Activated CD4-positive, alpha-beta memory T cell treated with anti-CD3 and anti-CD28 coated beads for 36 hours (primary cell): ENCODE measurements at regions of chr20 and their contacts with region 1.

Region 1: DNA sequence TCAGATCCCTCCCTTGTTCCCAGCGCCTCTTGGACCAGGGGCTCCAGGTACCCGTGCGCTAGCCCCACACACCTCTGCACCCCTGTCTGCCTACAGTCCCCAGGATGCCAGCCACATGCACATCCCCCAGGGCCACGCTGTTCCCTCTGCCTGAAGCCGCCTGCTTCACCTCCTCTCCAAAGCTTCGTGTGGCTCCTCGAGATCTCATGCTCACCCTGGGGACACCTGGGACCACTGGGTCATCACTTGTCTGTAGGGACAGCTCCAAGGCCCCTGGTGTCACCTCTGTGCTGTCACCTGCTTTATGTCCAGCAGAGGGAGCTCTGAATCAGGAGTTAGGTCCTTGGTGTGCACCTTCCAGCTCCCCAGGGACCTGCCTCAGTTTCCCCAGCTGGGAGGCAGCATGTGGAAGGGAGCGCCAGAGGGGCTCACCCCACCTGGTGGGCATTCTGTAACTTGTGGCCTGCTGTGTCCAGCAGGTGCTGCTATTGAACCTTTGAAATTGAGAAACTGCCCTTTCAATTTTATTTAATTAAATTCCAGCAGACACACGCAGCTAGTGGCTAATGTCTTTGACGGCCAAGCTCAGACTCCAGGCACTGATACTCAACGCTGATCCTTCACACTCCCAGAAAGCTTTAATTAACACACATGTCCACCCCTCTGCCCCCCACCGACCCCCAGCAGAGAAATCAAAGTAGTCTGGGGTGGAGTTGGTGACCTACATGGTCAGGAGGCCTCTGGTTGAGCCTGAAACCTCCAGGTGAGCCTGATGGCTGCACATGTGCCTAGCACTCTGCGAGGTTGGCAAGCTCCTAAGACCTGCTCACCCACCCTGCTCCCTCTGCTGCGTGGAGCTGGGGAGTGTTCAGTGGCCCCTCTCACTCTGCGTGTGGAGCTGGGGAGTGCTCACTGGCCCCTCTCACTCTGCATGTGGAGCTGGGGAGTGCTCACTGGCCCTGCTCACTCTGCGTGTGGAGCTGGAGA is 7.6 kb upstream of the YTHDF1 start:
- DNase-seq: peak; percentile 55
- H3K4me3 Mint-ChIP-seq: no peak overlapping the region
- H3K27ac Mint-ChIP-seq: no peak overlapping the region
- H3K4me1 Mint-ChIP-seq: no peaks in the 10 kb centered on the region
- H3K27me3 Mint-ChIP-seq: no peaks in the 10 kb centered on the region

Region 2: GRCh38 chr20:63206904-63207303 is 16.6 kb before region 1 on chr20:
- CTCF ChIA-PET with region 1: interaction called, 58 read pairs
- POLR2A ChIA-PET with region 1: no interaction called
- intact Hi-C with region 1: no loop called
- DNase-seq: no peak
- H3K4me3 Mint-ChIP-seq: no peak overlapping the region
- H3K27ac Mint-ChIP-seq: no peak overlapping the region
- H3K4me1 Mint-ChIP-seq: peaks cover 32% of the 10 kb centered on the region
- H3K27me3 Mint-ChIP-seq: no peaks in the 10 kb centered on the region

Region 3: DNA sequence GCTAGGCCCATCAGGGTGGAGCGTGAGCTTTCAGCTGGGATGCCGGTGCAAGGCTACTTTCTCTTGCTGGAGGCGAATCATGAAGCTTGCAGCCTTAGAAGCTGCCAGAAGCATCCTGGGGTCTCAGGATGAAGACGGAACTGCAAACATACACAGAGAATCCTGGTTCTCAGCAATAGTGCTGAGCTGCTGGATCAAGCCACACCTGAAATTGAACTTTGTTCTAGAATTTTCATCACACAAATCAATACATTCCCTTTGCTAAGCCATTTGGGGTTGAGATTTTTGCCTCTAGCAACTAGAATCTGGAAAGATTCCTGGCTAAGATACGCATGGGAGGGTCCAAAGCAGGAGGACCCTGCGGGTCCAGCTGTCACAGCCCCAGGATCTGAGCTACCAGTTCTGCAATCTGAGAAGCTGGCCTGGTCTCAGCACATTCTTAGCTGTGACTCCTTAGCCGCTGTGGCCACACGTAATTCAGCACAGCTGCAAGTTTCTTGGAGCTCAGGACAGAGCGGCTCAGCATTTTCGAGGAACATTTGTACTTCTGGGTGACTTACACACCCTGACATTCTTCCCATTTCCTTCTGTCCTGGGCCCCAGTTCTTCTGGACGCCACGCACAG is 42.5 kb after region 1 on chr20:
- CTCF ChIA-PET with region 1: interaction called, 25 read pairs
- POLR2A ChIA-PET with region 1: no interaction called
- intact Hi-C with region 1: loop called (anchors 5 kb)
- DNase-seq: no peak
- H3K4me3 Mint-ChIP-seq: no peak overlapping the region
- H3K27ac Mint-ChIP-seq: no peak overlapping the region
- H3K4me1 Mint-ChIP-seq: peaks cover 2% of the 10 kb centered on the region
- H3K27me3 Mint-ChIP-seq: peaks cover 11% of the 10 kb centered on the region

Region 4: DNA sequence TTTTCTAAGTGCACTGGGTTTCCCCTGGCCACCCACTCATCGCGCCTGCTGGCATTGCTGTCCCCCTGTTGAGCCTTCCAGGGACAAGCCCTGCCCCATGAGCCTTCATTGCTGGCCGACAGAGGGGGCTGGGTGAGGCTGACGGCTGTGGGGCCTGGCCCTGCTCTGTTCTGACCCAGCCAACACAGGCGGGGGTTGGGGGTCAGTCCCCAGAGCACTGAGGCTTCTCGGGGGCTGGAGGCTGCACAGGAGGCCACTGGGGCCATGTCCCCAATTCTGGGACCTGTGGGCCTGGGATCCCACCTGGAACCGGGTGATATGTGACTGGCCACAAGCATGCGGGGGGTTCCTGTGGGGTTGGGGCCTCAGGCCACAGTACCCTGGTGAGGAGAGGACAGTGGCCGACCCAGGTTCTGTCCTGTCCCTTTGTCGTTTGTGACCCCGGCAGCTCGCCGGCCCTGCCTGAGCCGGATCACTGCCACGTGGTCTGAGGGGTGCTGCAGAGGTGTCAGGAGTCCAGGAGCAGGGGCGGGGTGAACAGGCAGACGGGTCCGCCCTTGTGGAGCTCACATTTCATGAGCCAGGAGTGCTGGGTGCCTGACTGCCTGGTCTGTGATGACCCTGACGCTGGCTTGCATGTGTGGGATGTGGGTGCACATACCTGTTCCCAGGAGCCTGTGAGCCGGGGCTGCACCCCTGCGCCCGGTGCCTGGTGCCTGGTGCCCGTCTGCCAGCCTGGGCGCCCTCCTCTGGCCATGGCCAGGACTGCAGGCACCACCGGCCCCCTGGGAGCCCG is 67.4 kb after region 1 on chr20:
- CTCF ChIA-PET with region 1: interaction called, 12 read pairs
- POLR2A ChIA-PET with region 1: no interaction called
- intact Hi-C with region 1: loop called (anchors 5 kb)
- DNase-seq: peak; percentile 70
- H3K4me3 Mint-ChIP-seq: no peak overlapping the region
- H3K27ac Mint-ChIP-seq: no peak overlapping the region
- H3K4me1 Mint-ChIP-seq: peaks cover 9% of the 10 kb centered on the region
- H3K27me3 Mint-ChIP-seq: peaks cover 5% of the 10 kb centered on the region

Region 5: DNA sequence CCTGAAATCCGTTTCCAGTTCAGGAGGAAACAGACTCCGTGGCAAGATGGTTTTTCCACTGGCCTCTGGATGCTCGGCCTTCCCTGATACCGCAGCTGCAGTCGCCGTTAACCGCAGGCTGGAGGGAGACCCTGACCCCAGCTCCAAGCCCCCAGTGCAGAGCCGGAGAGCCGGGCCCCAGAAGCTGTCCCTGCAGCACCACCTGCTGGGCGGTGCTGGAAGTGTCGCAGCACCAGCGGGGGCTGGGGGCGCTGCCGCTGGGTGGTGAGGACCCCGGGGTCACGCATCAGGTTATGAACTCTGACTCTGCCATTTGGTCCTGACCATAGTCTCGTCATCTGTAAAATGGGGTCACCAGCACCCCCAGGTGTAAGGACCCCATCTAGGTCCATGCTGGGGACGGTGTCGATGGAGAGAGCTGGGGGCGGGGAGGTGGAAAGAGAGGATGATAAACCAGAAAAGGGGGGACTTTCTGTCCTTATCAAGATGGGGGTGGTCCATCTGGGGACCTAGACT is 158.4 kb after region 1 on chr20:
- CTCF ChIA-PET with region 1: interaction called, 35 read pairs
- POLR2A ChIA-PET with region 1: no interaction called
- intact Hi-C with region 1: loop called (anchors 10 kb)
- DNase-seq: peak; percentile 35
- H3K4me3 Mint-ChIP-seq: no peak overlapping the region
- H3K27ac Mint-ChIP-seq: no peak overlapping the region
- H3K4me1 Mint-ChIP-seq: no peaks in the 10 kb centered on the region
- H3K27me3 Mint-ChIP-seq: peaks cover 9% of the 10 kb centered on the region